Right cardiac atrium (tissue), 5 donors: ENCODE measurements at regions of chr20 and their contacts with region 1.

Region 1: GRCh38 chr20:49541733-49542513 is 26.0 kb downstream of the PTGIS start:
- DNase-seq: peak; percentile 64 to 83 (median 76)
- ATAC-seq: peak; percentile 45 to 74
- H3K4me3 ChIP-seq: no peak overlapping the region
- H3K27ac ChIP-seq: no peak overlapping the region
- H3K4me1 ChIP-seq: no peaks in the 10 kb centered on the region
- H3K27me3 ChIP-seq: no peaks in the 10 kb centered on the region

Region 2: GRCh38 chr20:49785852-49786175 is 243.9 kb after region 1 on chr20:
- intact Hi-C with region 1: no loop called
- DNase-seq: no peak
- ATAC-seq: no peak
- H3K4me3 ChIP-seq: no peak overlapping the region
- H3K27ac ChIP-seq: no peak overlapping the region
- H3K4me1 ChIP-seq: peaks cover 3% of the 10 kb centered on the region
- H3K27me3 ChIP-seq: no peaks in the 10 kb centered on the region

Region 3: GRCh38 chr20:49846206-49846807 is 304.4 kb after region 1 on chr20:
- intact Hi-C with region 1: loop called in 2 of 4 experiments (anchors 5 to 10 kb)
- DNase-seq: no peak
- ATAC-seq: peak; percentile 64 to 77
- H3K4me3 ChIP-seq: no peak overlapping the region
- H3K27ac ChIP-seq: no peak overlapping the region
- H3K4me1 ChIP-seq: peaks cover 5% of the 10 kb centered on the region
- H3K27me3 ChIP-seq: no peaks in the 10 kb centered on the region

Region 4: GRCh38 chr20:49853640-49854039 is 311.7 kb after region 1 on chr20:
- intact Hi-C with region 1: loop called in 2 of 4 experiments (anchors 5 to 10 kb)
- DNase-seq: no peak
- ATAC-seq: no peak
- H3K4me3 ChIP-seq: no peak overlapping the region
- H3K27ac ChIP-seq: no peak overlapping the region
- H3K4me1 ChIP-seq: peaks cover 9% of the 10 kb centered on the region
- H3K27me3 ChIP-seq: no peaks in the 10 kb centered on the region